ENCODE measurements at regions of chr6 and their contacts with region 1.

Region 1: GRCh38 chr6:143427109-143427817 is 23.2 kb downstream of the ADAT2 start:
- DNase-seq: no peak
- ATAC-seq: peak; percentile 99
- H3K4me3 ChIP-seq: no peak overlapping the region
- H3K27ac ChIP-seq: no peak overlapping the region
- H3K4me1 ChIP-seq: no peaks in the 10 kb centered on the region
- H3K27me3 ChIP-seq: no peaks in the 10 kb centered on the region
- CTCF ChIP-seq: peak; percentile 71 to 98 (median 95)
- POLR2A ChIP-seq: no peak
- RAD21 ChIP-seq: peak; percentile 92

Region 2: GRCh38 chr6:142566628-142567396 is 860.5 kb before region 1 on chr6:
- CTCF ChIA-PET with region 1: interaction called, 4 read pairs
- POLR2A ChIA-PET with region 1: no interaction called
- RAD21 ChIA-PET with region 1: interaction called in 1 of 2 experiments, 3 read pairs
- intact Hi-C with region 1: loop called (anchors 5 kb)
- DNase-seq: peak; percentile 66
- ATAC-seq: peak; percentile 86
- H3K4me3 ChIP-seq: no peak overlapping the region
- H3K27ac ChIP-seq: no peak overlapping the region
- H3K4me1 ChIP-seq: peaks cover 2 to 21% of the 10 kb centered on the region in 2 experiments; a peak in 3 of 4 replicates
- H3K27me3 ChIP-seq: no peaks in the 10 kb centered on the region
- CTCF ChIP-seq: peak; percentile 78 to 87 (median 81)
- POLR2A ChIP-seq: no peak
- RAD21 ChIP-seq: peak; percentile 76

Region 3: DNA sequence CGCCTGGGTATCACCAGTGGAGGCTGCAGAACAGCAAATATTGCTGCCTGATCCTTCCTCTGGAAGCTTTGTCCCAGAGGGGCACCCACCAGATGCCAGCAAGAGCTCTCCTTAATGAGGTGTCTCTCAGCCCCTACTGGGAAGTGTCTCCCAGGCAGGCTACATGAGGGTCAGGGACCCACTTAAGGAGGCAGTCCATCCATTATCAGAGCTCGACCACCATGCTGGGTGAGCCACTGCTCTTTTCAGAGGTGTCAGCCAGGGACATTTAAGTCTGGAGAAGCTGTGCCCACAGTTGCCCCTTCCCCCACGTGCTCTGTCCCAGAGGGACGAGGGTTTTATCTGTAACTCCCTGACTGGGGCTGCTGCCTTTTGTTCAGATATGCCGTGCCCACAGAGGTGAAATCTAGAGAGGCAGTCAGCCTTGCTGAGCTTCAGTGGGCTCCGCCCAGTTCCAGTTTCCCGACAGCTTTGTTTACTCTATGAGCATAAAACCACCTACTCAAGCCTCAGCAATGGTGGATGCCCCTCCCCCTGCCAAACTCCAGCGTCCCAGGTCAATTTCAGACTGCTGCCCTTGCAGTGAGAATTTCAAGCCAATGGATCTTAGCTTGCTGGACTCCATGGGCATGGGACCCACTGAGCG is 392.5 kb before region 1 on chr6:
- CTCF ChIA-PET with region 1: no interaction called
- POLR2A ChIA-PET with region 1: no interaction called
- RAD21 ChIA-PET with region 1: no interaction called
- intact Hi-C with region 1: loop called (anchors 5 kb)
- DNase-seq: no peak
- ATAC-seq: no peak
- H3K4me3 ChIP-seq: no peak overlapping the region
- H3K27ac ChIP-seq: no peak overlapping the region
- H3K4me1 ChIP-seq: no peaks in the 10 kb centered on the region
- H3K27me3 ChIP-seq: no peaks in the 10 kb centered on the region
- CTCF ChIP-seq: no peak
- POLR2A ChIP-seq: no peak
- RAD21 ChIP-seq: no peak

Region 4: GRCh38 chr6:143232849-143233248 is 194.4 kb before region 1 on chr6:
- CTCF ChIA-PET with region 1: interaction called, 15 read pairs
- POLR2A ChIA-PET with region 1: no interaction called
- RAD21 ChIA-PET with region 1: interaction called in 1 of 2 experiments, 3 read pairs
- intact Hi-C with region 1: loop called (anchors 2 kb)
- DNase-seq: peak; percentile 15
- ATAC-seq: peak; percentile 81
- H3K4me3 ChIP-seq: no peak overlapping the region
- H3K27ac ChIP-seq: no peak overlapping the region
- H3K4me1 ChIP-seq: peaks cover 0 to 8% of the 10 kb centered on the region in 2 experiments; a peak in 1 of 4 replicates
- H3K27me3 ChIP-seq: no peaks in the 10 kb centered on the region
- CTCF ChIP-seq: peak; percentile 36 to 79 (median 75); a peak in 5 of 6 replicates
- POLR2A ChIP-seq: no peak
- RAD21 ChIP-seq: peak; percentile 42; the same call in 1 of the 2 replicates